ENCODE measurements at regions of chr18 and their contacts with region 1.

Region 1: DNA sequence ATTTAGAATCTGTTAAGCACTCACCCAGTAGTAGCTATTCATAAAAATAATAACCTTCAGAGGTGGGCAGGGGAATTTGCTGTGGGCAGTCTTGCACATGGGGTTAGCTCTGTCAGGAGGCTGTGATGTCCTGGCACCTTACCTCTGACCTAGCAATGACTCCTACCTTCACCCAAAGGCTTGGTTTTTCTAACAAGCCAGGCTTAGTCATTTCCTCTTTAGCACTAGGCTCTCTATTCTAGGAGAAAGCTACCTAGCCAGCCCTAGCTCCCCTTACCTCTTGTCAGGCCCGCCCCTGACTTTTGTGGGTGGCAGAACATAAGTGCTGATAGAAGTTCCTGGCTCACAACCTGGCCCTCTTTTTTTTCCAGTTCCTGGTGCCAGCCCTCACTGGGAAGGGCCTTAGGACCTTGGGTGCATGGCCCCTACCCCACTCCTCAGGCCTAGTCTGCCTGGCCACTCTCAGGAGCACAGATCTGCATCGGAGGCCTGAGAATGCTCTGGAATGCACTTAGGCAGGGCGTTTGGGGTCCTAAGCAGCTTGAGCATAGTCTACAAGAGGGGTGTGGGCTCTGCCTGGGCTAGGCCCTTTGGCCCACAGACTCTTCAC is 17.7 kb downstream of the CPLX4 start:
- DNase-seq: peak; percentile 6 to 87
- H3K4me3 ChIP-seq: no peak overlapping the region
- H3K27ac ChIP-seq: peak overlapping the region; percentile 75
- H3K4me1 ChIP-seq: peaks cover 34% of the 10 kb centered on the region
- H3K27me3 ChIP-seq: no peaks in the 10 kb centered on the region
- CTCF ChIP-seq: no peak

Region 2: GRCh38 chr18:59189746-59190145 is 111.0 kb before region 1 on chr18:
- CTCF ChIA-PET with region 1: no interaction called
- POLR2A ChIA-PET with region 1: no interaction called
- intact Hi-C with region 1: no loop called
- DNase-seq: no peak
- H3K4me3 ChIP-seq: no peak overlapping the region
- H3K27ac ChIP-seq: no peak overlapping the region
- H3K4me1 ChIP-seq: no peaks in the 10 kb centered on the region
- H3K27me3 ChIP-seq: peaks cover 64% of the 10 kb centered on the region
- CTCF ChIP-seq: no peak

Region 3: DNA sequence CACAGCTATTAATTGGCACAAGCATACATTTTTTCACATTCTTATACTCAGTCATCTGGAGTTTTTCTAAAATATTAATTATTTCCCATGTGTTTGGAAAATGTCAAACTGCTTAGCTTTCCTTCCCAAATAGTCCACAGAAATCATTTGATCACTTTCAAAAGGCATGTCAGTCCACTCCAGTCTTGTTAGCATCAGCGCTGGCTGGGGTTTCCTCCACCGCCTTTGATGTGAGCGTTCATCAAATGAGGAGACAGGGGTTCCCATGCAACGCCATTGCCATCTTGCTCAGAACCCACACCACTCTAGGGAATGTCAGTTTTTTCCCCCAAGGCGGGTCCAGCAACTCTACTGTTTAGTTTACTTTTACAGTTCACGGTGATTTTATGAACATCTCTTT is 14.4 kb before region 1 on chr18:
- CTCF ChIA-PET with region 1: no interaction called
- POLR2A ChIA-PET with region 1: no interaction called
- intact Hi-C with region 1: no loop called
- DNase-seq: no peak
- H3K4me3 ChIP-seq: no peak overlapping the region
- H3K27ac ChIP-seq: no peak overlapping the region
- H3K4me1 ChIP-seq: no peaks in the 10 kb centered on the region
- H3K27me3 ChIP-seq: no peaks in the 10 kb centered on the region
- CTCF ChIP-seq: no peak

Region 4: DNA sequence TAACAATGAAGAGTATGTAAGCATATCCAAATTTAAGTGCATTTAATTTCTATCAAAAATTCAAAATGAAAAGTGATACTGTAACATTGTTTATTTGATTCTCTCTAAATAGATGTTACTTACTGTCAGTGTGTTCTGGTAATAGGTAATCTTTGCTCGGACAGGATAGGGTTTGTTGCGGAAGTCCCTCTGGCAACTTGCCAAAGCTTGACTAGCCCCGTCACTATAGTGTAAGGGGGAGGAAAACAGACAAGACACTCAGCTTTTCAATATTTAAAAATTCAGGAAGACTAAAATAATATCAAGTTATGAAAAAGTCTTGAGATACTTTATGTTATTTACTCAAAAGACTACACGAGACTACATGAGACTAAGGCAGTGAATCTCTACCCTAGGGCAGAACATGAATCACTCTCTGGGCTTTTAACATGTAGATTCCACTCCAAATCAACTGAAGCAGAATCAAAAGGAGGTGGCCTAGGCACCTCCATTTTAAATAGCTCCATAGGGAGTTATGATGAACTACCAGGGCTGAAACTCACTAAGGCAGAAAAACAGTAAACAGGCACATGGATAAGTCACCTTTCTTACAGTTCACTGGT is 52.4 kb after region 1 on chr18:
- CTCF ChIA-PET with region 1: no interaction called
- POLR2A ChIA-PET with region 1: no interaction called
- intact Hi-C with region 1: no loop called
- DNase-seq: no peak
- H3K4me3 ChIP-seq: no peak overlapping the region
- H3K27ac ChIP-seq: no peak overlapping the region
- H3K4me1 ChIP-seq: peaks cover 17% of the 10 kb centered on the region
- H3K27me3 ChIP-seq: no peaks in the 10 kb centered on the region
- CTCF ChIP-seq: no peak

Region 5: DNA sequence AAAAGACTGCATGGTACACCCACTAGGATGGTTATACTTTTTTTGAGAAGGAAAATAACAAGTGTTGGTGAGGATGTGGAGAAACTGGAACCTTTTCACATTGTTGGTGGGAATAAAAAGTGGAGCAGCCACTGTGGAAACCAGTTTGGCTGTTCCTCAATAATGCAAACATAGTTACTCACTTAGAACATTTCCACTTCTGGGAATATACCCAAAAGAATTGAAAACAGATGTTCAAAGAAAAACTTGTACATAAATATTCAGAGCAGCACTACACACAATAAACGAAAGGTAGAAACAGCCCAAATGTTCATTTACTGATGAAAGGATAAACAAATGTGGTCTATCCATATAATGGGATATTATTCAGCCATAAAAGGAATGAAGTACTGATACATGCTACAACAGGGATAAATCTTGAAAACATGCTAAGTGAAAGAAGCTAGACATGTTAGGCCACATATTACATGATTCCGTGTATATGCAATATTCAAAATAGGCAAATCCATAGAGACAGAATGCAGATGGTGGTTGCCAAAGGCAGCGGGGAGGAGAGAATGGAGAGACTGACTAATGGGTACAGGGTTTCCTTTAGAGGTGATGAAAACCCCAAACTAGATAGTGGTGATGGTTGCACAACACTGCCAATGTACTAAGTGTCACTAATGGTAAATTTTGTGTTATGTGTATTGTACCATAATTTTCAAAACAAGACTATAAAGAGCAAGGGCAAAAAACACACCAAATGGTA is 79.2 kb after region 1 on chr18:
- CTCF ChIA-PET with region 1: no interaction called
- POLR2A ChIA-PET with region 1: no interaction called
- intact Hi-C with region 1: loop called (anchors 5 kb)
- DNase-seq: no peak
- H3K4me3 ChIP-seq: no peak overlapping the region
- H3K27ac ChIP-seq: no peak overlapping the region
- H3K4me1 ChIP-seq: 0 out of 2 replicates have a peak, but pooled peaks cover 6% of the 10 kb centered on the region
- H3K27me3 ChIP-seq: no peaks in the 10 kb centered on the region
- CTCF ChIP-seq: no peak